ENCODE measurements at regions of chr10 and their contacts with region 1.

Region 1: DNA sequence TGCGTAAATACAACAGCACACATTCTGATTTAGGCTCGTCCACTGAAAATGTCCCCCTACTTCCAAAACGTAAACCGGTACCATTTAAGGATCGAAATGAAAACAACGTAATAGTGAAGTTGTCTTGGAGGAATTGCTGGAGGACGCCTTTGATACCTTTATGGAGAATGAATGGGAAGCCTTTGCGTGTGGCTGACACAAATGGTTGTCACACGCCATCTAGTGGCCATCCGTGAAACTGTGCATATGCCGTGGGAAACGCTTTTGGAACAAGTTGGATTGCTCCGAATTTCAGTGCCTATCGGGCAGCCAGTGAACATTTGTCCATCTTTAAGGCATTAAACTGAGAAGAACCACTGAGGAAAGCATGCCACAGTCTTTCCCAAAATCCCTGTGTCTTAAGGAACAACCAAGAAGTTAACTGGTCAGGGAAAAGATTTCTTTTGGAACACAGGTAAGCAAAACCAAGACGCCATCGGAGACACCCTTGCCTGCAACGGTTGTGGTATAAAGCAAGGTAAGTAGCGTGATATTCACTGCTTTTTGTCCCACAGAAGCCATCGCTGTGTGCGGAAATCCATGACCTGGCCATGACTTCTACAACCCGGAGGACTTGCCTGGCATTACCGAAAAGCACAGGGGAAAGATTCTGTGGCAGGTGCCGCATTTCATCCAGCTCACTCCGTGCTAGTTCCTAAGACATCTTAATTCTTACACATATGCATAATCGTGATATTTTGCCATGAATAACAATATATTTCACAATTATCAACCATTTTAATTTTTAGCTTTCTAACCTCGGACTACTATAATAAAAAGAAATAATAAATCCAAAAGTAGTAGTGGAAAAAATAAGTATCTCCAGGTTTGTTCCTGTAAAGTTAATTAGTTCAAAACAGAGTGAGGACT is 100.6 kb downstream of the FAM204A start:
- DNase-seq: peak in 2 of 3 donors; percentile 82 to 92
- ATAC-seq: peak; percentile 89
- H3K4me3 ChIP-seq: no peak overlapping the region
- H3K4me1 ChIP-seq: no peaks in the 10 kb centered on the region
- CTCF ChIP-seq: peak; percentile 72

Region 2: DNA sequence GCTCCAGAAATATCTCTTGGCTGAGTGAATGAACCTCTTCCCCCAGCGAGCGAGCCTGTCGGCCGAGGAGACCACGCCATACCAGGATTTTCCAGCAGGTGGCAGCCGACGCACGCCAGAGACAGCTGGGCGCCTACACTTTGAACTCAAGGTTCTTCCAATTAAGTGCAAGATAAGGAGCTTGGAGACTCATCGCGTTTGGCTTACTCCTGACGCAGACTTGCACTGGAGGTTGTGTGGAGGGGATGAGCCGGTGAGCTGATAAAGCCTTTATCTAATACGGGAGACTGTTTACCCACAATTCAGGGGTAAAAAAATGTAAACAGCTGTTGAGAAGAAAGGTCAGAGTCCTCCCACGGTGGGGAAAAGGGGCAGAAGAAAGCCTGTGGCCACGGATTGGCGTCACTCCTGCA is 744.9 kb before region 1 on chr10:
- intact Hi-C with region 1: loop called (anchors 5 to 10 kb)
- DNase-seq: peak; percentile 68 to 89 (median 87)
- ATAC-seq: peak; percentile 96
- H3K4me3 ChIP-seq: no peak overlapping the region
- H3K4me1 ChIP-seq: no peaks in the 10 kb centered on the region
- CTCF ChIP-seq: peak; percentile 92

Region 3: DNA sequence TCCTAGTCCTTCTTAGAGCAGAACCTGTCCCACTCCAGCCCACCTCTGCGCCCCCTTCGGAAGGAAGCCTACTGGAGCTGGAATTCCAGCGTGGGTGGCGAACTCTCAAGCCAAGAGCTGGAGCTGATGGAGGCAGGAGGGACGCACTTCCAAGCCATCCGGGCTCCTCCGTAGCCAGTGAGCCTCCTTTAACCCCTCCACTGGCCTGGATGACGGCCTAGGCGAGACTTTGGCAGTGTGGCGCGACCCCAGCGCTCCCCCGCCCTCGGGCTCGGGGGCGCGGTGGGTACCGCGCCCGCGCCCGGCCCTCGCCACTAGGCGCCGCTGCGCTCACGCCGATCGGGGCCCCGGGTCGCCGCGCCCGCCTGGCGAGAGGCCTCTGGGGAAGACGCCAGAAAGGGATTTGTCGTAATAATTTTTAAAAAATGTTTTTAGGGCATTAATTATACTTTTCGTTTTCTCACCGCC is 704.0 kb before region 1 on chr10:
- intact Hi-C with region 1: loop called in 1 of 2 experiments (anchors 10 kb)
- DNase-seq: no peak
- ATAC-seq: peak; percentile 60
- H3K4me3 ChIP-seq: no peak overlapping the region
- H3K4me1 ChIP-seq: peaks cover 7% of the 10 kb centered on the region
- CTCF ChIP-seq: peak; percentile 27

Region 4: DNA sequence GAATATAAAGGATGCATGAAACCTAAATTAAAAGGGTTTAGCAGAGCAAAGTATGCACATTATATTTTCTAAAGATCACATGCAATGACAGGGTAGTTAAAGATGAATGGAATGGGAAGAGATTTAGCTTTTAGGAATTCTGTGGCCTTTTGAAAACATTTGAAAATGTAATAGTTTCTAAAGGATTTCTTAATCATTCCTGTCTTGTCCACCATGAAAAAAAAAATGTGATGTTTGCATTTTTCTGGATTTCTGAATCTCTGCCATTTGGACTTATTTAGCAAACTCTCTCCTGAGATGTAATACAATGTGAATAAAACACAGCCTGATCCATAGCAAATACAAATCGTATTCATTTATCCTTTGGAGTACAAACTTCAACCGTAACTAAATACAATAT is 68.2 kb before region 1 on chr10:
- intact Hi-C with region 1: no loop called
- DNase-seq: no peak
- ATAC-seq: no peak
- H3K4me3 ChIP-seq: no peak overlapping the region
- H3K4me1 ChIP-seq: no peaks in the 10 kb centered on the region
- CTCF ChIP-seq: no peak